ENCODE measurements at regions of chr10 and their contacts with region 1.

Region 1: GRCh38 chr10:20990604-20991003 is 93.5 kb upstream of the NEBL start:
- DNase-seq: no peak
- ATAC-seq: no peak
- H3K4me3 ChIP-seq: no peak overlapping the region
- H3K27ac ChIP-seq: no peak overlapping the region
- H3K4me1 ChIP-seq: no peaks in the 10 kb centered on the region; the same call in 1 of the 2 replicates
- H3K27me3 ChIP-seq: no peaks in the 10 kb centered on the region
- CTCF ChIP-seq: no peak

Region 2: GRCh38 chr10:20963056-20963455 is 27.5 kb before region 1 on chr10:
- CTCF ChIA-PET with region 1: no interaction called
- POLR2A ChIA-PET with region 1: interaction called, 10 read pairs
- in situ Hi-C with region 1: no loop called
- intact Hi-C with region 1: no loop called
- DNase-seq: no peak
- ATAC-seq: no peak
- H3K4me3 ChIP-seq: no peak overlapping the region
- H3K27ac ChIP-seq: no peak overlapping the region
- H3K4me1 ChIP-seq: no peaks in the 10 kb centered on the region; the same call in 1 of the 2 replicates
- H3K27me3 ChIP-seq: no peaks in the 10 kb centered on the region
- CTCF ChIP-seq: no peak

Region 3: DNA sequence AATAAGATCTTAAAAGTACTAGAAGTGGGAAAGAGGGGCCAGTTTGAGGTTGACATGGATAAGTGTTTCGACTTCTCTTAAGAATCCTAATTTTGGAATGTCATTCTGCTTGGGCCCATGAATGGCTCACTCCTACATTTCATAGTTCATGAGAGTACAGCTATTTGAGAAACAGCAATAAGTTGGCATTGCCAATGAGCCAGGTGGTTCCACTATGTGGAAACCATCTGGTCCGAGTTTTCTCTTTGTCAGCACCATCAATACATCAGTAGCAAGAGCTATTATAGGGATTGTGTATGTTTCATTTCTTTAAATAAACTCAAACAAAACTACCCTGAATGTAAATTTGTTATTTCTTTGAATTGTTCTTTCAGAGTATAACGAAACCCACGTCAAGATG is 15.4 kb before region 1 on chr10:
- CTCF ChIA-PET with region 1: no interaction called
- POLR2A ChIA-PET with region 1: no interaction called
- in situ Hi-C with region 1: no loop called
- intact Hi-C with region 1: no loop called
- DNase-seq: no peak
- ATAC-seq: no peak
- H3K4me3 ChIP-seq: no peak overlapping the region
- H3K27ac ChIP-seq: no peak overlapping the region
- H3K4me1 ChIP-seq: no peaks in the 10 kb centered on the region; the same call in 1 of the 2 replicates
- H3K27me3 ChIP-seq: no peaks in the 10 kb centered on the region
- CTCF ChIP-seq: no peak

Region 4: GRCh38 chr10:21069929-21070700 is 79.5 kb after region 1 on chr10:
- CTCF ChIA-PET with region 1: no interaction called
- POLR2A ChIA-PET with region 1: no interaction called
- in situ Hi-C with region 1: no loop called
- intact Hi-C with region 1: no loop called
- DNase-seq: no peak
- ATAC-seq: no peak
- H3K4me3 ChIP-seq: no peak overlapping the region
- H3K27ac ChIP-seq: no peak overlapping the region
- H3K4me1 ChIP-seq: no peaks in the 10 kb centered on the region; the same call in 1 of the 2 replicates
- H3K27me3 ChIP-seq: no peaks in the 10 kb centered on the region
- CTCF ChIP-seq: no peak

Region 5: GRCh38 chr10:21533467-21534279 is 543.1 kb after region 1 on chr10 and contains the start of gene MLLT10:
- CTCF ChIA-PET with region 1: no interaction called
- POLR2A ChIA-PET with region 1: no interaction called
- in situ Hi-C with region 1: no loop called
- intact Hi-C with region 1: no loop called
- DNase-seq: no peak
- ATAC-seq: peak; percentile 92
- H3K4me3 ChIP-seq: peak within 1 kb of the TSS; percentile 58 to 76
- H3K27ac ChIP-seq: peak within 1 kb of the TSS; percentile 93
- H3K4me1 ChIP-seq: peaks cover 32% of the 10 kb centered on the region
- H3K27me3 ChIP-seq: no peaks in the 10 kb centered on the region
- CTCF ChIP-seq: no peak
- total RNA-seq, gene MLLT10: 33.4 TPM

Measured in Panc1 (cell line).